Naive thymus-derived CD4-positive, alpha-beta T cell (primary cell): ENCODE measurements at regions of chr19 and their contacts with region 1.

Region 1: GRCh38 chr19:51703575-51704515 is 10.7 kb downstream of the SPACA6 start:
- DNase-seq: peak; percentile 95 to 98 (median 97)
- ATAC-seq: peak; percentile 98
- H3K4me3 ChIP-seq: peak overlapping the region; percentile 98
- H3K4me3 Mint-ChIP-seq: peak overlapping the region; percentile 82 to 92 (median 90)
- H3K27ac ChIP-seq: peak overlapping the region; percentile 99
- H3K27ac Mint-ChIP-seq: peak overlapping the region; percentile 87 to 95 (median 91)
- H3K4me1 ChIP-seq: peaks cover 3 to 9% of the 10 kb centered on the region in 2 donors
- H3K4me1 Mint-ChIP-seq: peaks cover 29 to 50% (median 43%) of the 10 kb centered on the region in 7 donors
- H3K27me3 ChIP-seq: no peaks in the 10 kb centered on the region
- H3K27me3 Mint-ChIP-seq: peaks cover 0 to 7% (median 0%) of the 10 kb centered on the region in 5 donors

Region 2: DNA sequence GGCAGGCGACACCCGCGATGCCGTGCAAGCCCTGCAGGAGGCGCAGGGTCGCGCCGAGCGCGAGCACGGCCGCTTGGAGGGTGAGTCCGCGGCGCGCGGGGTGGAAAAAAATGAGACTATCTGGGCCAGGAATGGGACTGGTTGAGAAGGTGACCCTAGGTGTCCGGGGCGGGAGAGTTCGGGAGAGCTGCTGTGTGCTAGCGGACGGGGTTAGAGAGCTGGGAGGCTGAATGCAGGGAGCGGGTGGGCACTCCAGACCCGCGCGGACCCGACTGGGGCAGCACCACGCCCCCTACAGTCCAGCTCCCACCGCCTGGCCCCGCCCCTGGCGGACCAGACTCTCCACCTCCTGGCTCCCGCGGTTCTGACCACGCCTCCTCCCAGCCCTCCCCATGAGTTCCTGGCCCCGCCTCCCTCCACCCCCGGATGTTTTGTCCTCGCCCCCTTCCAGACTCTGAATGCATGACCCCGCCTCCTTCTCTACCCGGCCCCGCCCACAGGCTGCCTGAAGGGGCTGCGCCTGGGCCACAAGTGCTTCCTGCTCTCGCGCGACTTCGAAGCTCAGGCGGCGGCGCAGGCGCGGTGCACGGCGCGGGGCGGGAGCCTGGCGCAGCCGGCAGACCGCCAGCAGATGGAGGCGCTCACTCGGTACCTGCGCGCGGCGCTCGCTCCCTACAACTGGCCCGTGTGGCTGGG is 979.2 kb before region 1 on chr19:
- CTCF ChIA-PET with region 1: no interaction called
- POLR2A ChIA-PET with region 1: no interaction called
- intact Hi-C with region 1: loop called in 1 of 2 experiments (anchors 10 kb)
- DNase-seq: peak; percentile 74 to 99 (median 94)
- ATAC-seq: peak; percentile 93
- H3K4me3 ChIP-seq: peak overlapping the region; percentile 62
- H3K4me3 Mint-ChIP-seq: peak overlapping the region; percentile 79 to 92 (median 84)
- H3K27ac ChIP-seq: peak overlapping the region; percentile 66
- H3K27ac Mint-ChIP-seq: peak overlapping the region in 8 of 9 donors; percentile 34 to 87 (median 70)
- H3K4me1 ChIP-seq: peaks cover 5 to 12% of the 10 kb centered on the region in 2 donors
- H3K4me1 Mint-ChIP-seq: peaks cover 0 to 34% (median 24%) of the 10 kb centered on the region in 7 donors
- H3K27me3 ChIP-seq: peaks cover 5 to 12% of the 10 kb centered on the region in 2 donors
- H3K27me3 Mint-ChIP-seq: peaks cover 47 to 70% (median 53%) of the 10 kb centered on the region in 5 donors

Region 3: DNA sequence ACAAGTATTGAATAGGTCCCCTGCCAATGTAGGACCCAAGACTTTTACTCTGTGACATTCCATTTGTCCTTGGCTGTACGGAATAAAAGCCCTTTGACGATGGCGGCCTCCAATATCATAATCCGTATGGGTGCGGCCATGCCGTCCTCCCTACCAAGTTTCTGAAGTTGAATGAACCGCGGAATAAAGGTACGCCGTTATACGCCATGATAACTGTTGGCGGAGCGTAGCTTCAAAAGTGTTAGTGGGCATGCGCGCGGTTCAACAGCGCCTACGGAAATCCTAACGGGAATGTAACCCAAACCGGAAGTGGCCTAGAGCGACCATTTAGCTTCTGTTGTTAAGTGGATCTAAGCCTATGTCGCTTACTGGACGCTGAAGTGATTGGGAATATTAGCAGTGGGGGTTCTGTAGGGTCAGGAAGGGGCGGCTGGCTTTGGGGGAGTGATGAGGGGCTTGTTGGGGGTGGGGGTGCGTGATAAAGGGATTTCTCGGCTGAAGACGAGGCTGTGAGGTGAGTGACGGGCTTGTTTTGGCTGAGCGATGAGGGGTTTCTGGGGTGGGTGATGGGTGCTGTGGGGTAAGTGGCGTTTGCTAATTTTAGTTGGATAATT is 132.8 kb before region 1 on chr19 and contains the start of gene ZNF175:
- CTCF ChIA-PET with region 1: no interaction called
- POLR2A ChIA-PET with region 1: interaction called, 3 read pairs
- intact Hi-C with region 1: loop called in 1 of 2 experiments (anchors 2 kb)
- DNase-seq: peak; percentile 41 to 79 (median 71)
- ATAC-seq: peak; percentile 96
- H3K4me3 ChIP-seq: peak within 1 kb of the TSS; percentile 84
- H3K4me3 Mint-ChIP-seq: peak within 1 kb of the TSS; percentile 82 to 99 (median 96)
- H3K27ac ChIP-seq: peak within 1 kb of the TSS; percentile 30
- H3K27ac Mint-ChIP-seq: peak within 1 kb of the TSS; percentile 36 to 90 (median 80)
- H3K4me1 ChIP-seq: peaks cover 10 to 11% of the 10 kb centered on the region in 2 donors
- H3K4me1 Mint-ChIP-seq: peaks cover 21 to 45% (median 34%) of the 10 kb centered on the region in 7 donors
- H3K27me3 ChIP-seq: no peaks in the 10 kb centered on the region
- H3K27me3 Mint-ChIP-seq: peaks cover 4 to 18% (median 7%) of the 10 kb centered on the region in 5 donors
- total RNA-seq, gene ZNF175: 6.8 to 19.1 (median 10.2) TPM

Region 4: GRCh38 chr19:51660975-51661600 is 42.8 kb before region 1 on chr19:
- CTCF ChIA-PET with region 1: interaction called, 10 read pairs
- POLR2A ChIA-PET with region 1: no interaction called
- intact Hi-C with region 1: loop called in 1 of 2 experiments (anchors 2 kb)
- DNase-seq: peak in 8 of 9 donors; percentile 7 to 52 (median 29)
- ATAC-seq: peak; percentile 60
- H3K4me3 ChIP-seq: no peak overlapping the region
- H3K4me3 Mint-ChIP-seq: no peak overlapping the region
- H3K27ac ChIP-seq: no peak overlapping the region
- H3K27ac Mint-ChIP-seq: no peak overlapping the region
- H3K4me1 ChIP-seq: no peaks in the 10 kb centered on the region
- H3K4me1 Mint-ChIP-seq: peaks cover 4 to 8% (median 7%) of the 10 kb centered on the region in 7 donors
- H3K27me3 ChIP-seq: peaks cover 0 to 6% of the 10 kb centered on the region in 2 donors
- H3K27me3 Mint-ChIP-seq: peaks cover 17 to 34% (median 28%) of the 10 kb centered on the region in 5 donors

Region 5: DNA sequence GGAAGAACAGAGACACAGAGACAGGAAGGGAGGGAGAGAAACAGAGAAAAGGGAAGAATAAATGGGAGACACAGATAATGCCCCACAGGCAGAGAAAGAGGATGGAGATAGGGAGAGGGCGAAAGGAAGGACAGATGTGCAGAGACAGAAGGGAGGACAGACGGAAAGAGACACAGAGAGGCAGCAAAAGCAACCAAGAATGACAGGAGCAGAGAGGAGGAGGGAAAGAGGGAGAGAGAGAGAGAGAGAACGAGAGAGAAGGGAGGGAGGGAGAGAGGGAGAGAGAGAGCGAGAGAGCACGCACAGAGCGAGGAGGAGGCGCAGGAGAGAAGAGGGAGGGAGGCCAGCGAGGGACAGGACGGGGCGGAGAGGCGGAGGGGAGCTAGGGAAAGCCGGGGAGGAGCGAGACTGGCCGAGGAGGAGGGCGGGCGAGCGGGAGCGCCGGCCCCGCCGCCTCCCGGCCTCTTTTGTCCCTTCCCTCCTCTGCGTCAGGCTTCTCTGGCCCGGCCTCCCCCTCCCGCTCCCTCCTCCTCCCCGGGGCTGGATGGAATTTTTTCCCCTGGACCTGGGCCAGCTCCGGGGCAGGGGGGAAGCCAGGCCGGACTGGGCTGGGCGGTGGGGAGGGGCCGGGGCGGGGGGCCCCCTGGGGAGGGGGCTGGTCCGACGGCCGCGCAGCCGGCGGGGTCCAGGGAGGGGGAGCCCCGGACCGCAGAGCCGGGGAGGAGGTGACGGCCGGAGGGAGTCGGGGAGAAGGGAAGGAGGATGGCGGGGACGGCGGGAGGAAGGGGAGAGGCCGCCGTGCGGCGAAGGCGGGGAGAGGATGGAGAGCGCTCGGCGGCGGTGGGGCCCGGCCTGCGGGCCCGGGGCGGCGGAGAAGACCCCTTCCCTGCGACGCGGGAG is 14.9 kb before region 1 on chr19:
- CTCF ChIA-PET with region 1: no interaction called
- POLR2A ChIA-PET with region 1: interaction called, 12 read pairs
- intact Hi-C with region 1: loop called (anchors 1 kb)
- DNase-seq: peak in 1 of 9 donors; percentile 37
- ATAC-seq: no peak
- H3K4me3 ChIP-seq: no peak overlapping the region
- H3K4me3 Mint-ChIP-seq: peak overlapping the region; percentile 86 to 99 (median 92)
- H3K27ac ChIP-seq: peak overlapping the region; percentile 93
- H3K27ac Mint-ChIP-seq: peak overlapping the region; percentile 48 to 91 (median 78)
- H3K4me1 ChIP-seq: peaks cover 0 to 5% of the 10 kb centered on the region in 2 donors
- H3K4me1 Mint-ChIP-seq: peaks cover 17 to 27% (median 23%) of the 10 kb centered on the region in 7 donors
- H3K27me3 ChIP-seq: no peaks in the 10 kb centered on the region
- H3K27me3 Mint-ChIP-seq: peaks cover 0 to 27% (median 5%) of the 10 kb centered on the region in 5 donors

Region 6: DNA sequence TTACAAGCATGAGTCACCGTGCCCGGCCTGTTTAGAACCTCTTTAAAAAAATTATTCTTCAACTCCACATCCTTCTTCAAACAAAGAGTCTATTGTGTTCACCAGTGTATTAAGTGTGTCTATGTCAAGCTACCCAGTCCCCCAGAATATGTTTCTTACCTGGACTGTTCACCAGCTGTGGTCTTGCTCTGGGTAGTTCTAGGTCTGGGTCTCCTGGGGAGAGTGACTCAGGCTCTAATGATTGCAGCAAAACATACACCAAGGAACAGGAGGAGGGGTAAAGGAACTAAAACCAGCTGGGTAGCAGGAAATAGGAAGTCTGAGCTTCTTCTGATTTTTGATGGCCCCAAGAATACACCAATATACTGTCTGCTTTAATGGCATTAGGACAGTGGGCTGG is 47.8 kb after region 1 on chr19 and contains the start of gene FPR1:
- CTCF ChIA-PET with region 1: no interaction called
- POLR2A ChIA-PET with region 1: no interaction called
- intact Hi-C with region 1: no loop called
- DNase-seq: no peak
- ATAC-seq: peak; percentile 83
- H3K4me3 ChIP-seq: no peak within 1 kb of the TSS
- H3K4me3 Mint-ChIP-seq: no peak within 1 kb of the TSS
- H3K27ac ChIP-seq: no peak within 1 kb of the TSS
- H3K27ac Mint-ChIP-seq: no peak within 1 kb of the TSS
- H3K4me1 ChIP-seq: no peaks in the 10 kb centered on the region
- H3K4me1 Mint-ChIP-seq: no peaks in the 10 kb centered on the region
- H3K27me3 ChIP-seq: no peaks in the 10 kb centered on the region
- H3K27me3 Mint-ChIP-seq: peaks cover 0 to 19% (median 4%) of the 10 kb centered on the region in 5 donors
- total RNA-seq, gene FPR1: 0.38 to 68.2 (median 3.4) TPM in 4 of 5 experiments, not detected in the other